ENCODE measurements at regions of chr9 and their contacts with region 1.

Region 1: DNA sequence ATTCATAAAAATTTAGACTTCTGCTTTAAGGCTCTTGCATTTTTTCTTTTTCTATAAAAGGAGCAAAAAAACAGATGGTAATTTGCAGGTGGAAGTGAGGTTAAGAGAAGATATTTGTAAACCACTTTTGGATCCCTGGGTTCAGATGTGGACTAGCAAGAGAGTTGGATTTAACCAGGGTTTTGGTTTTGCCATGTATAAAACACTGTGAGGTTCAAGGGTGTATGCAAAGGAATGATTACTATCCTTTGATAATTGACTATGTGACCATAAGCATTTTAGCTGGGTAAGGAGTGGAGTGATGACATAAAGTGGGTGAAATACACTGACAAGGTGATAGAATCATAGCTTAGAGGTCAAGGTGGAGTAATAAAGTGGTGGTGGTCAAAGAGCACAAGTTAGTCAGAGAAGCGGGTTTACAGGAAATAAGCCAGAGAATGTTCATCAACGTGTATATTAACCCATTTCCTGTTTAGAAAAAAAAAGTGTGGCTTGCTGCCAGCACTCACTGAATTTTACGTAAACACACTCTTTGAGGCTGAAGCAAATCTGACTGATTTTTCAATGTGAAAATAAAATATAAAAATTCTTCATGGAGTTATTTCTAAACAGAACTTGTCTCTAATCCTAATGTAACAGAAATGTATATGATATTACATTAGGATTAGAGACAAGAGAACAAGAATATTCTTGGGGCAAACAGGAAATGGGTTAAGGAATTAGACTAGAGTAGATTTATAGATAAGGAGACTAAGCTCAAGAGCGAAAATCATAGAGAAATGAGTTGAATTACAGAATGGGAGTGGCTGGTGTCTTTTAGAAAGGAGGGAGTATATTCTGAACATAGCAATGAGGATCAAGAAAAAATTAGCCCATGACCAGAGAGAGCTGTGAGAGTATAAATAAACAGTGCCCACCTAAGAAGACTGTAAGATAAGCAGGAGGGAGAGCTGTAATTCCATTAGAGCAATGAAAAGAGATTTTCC is 74.5 kb downstream of the CDKN2A start:
- DNase-seq: peak; percentile 37
- H3K4me3 Mint-ChIP-seq: peak overlapping the region; percentile 59
- H3K27ac Mint-ChIP-seq: peak overlapping the region; percentile 67
- H3K4me1 Mint-ChIP-seq: peaks cover 19% of the 10 kb centered on the region
- H3K27me3 Mint-ChIP-seq: no peaks in the 10 kb centered on the region
- CTCF ChIP-seq: no peak

Region 2: DNA sequence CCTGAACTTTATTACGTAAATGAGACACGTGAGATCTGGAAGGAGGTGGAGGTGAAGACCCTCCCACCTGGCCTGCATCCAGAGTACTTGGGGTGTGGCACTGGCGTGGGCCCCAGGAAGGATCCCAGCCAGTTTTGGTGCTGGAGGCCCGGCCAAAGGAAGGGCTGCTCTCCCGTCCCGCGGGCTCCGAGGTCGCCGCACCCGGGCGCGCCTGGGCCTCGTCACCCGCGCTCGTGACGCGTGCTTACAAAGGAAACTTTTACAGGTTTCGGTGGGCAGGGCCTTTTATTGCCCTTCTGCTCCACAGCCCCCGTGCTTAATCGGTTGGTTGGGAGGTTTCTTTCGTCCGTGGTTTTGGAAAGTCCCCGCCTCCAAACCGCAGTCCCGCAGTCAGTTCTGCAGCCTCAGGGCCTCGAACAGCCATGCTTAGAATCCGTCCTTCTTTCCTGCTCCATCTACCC is 45.3 kb after region 1 on chr9:
- CTCF ChIA-PET with region 1: no interaction called
- intact Hi-C with region 1: loop called (anchors 5 kb)
- DNase-seq: peak; percentile 56
- H3K4me3 Mint-ChIP-seq: peak overlapping the region; percentile 61
- H3K27ac Mint-ChIP-seq: peak overlapping the region; percentile 33
- H3K4me1 Mint-ChIP-seq: peaks cover 16% of the 10 kb centered on the region
- H3K27me3 Mint-ChIP-seq: no peaks in the 10 kb centered on the region
- CTCF ChIP-seq: no peak